ENCODE measurements at regions of chr7 and their contacts with region 1.

Region 1: GRCh38 chr7:100428967-100429636 is 529 bp upstream of the MEPCE start:
- DNase-seq: peak; percentile 100
- ATAC-seq: peak; percentile 76
- H3K4me3 ChIP-seq: peak overlapping the region; percentile 88
- H3K4me3 Mint-ChIP-seq: peak overlapping the region; percentile 93 to 100 (median 97)
- H3K27ac ChIP-seq: peak overlapping the region; percentile 97
- H3K27ac Mint-ChIP-seq: peak overlapping the region; percentile 99 to 100 (median 100)
- H3K4me1 ChIP-seq: peaks cover 22 to 29% of the 10 kb centered on the region in 2 donors
- H3K4me1 Mint-ChIP-seq: peaks cover 22 to 56% (median 42%) of the 10 kb centered on the region in 7 donors
- H3K27me3 ChIP-seq: no peaks in the 10 kb centered on the region
- H3K27me3 Mint-ChIP-seq: peaks cover 0 to 24% (median 0%) of the 10 kb centered on the region in 5 donors

Region 2: GRCh38 chr7:99472561-99473243 is 956.4 kb before region 1 on chr7 and contains the start of gene ZNF789:
- CTCF ChIA-PET with region 1: no interaction called
- POLR2A ChIA-PET with region 1: no interaction called
- intact Hi-C with region 1: loop called in 1 of 2 experiments (anchors 10 kb)
- DNase-seq: peak; percentile 90 to 98 (median 95)
- ATAC-seq: peak; percentile 99
- H3K4me3 ChIP-seq: peak within 1 kb of the TSS; percentile 86
- H3K4me3 Mint-ChIP-seq: peak within 1 kb of the TSS; percentile 94 to 99 (median 98)
- H3K27ac ChIP-seq: peak within 1 kb of the TSS; percentile 82
- H3K27ac Mint-ChIP-seq: peak within 1 kb of the TSS; percentile 87 to 98 (median 95)
- H3K4me1 ChIP-seq: peaks cover 8 to 15% of the 10 kb centered on the region in 2 donors
- H3K4me1 Mint-ChIP-seq: peaks cover 23 to 48% (median 35%) of the 10 kb centered on the region in 7 donors
- H3K27me3 ChIP-seq: no peaks in the 10 kb centered on the region
- H3K27me3 Mint-ChIP-seq: peaks cover 0 to 5% (median 0%) of the 10 kb centered on the region in 5 donors
- total RNA-seq, gene ZNF789: 17.4 to 28.0 (median 27.3) TPM

Region 3: DNA sequence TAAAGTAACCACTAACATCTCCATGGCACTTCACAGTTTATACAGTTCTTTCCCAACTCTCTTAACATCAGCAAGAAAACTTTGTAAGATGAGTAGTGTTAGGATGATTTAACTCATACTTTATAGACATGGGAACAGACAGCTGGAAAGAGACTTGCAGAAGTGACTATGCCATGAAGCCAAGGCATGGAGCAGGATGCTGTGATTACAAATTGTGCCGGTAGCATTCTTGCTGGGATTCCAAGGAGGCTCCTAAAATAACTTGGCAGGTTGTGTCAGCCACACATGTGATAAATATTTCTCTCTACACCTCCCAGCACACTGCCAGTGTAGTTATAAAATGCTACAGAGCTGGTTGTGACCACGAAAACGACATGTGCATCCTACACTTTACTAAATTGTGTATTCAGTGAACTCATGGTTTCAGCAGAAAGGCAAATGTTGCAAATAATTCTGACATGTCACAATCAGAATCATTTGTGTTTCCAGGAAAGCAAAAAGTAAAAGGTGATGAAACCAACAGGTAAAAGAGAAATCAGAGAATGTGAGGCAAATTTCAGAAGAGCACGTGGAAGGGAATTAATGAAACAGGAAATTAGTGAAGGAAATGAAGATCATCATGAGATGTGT is 639.5 kb before region 1 on chr7:
- CTCF ChIA-PET with region 1: no interaction called
- POLR2A ChIA-PET with region 1: no interaction called
- intact Hi-C with region 1: no loop called
- DNase-seq: no peak
- ATAC-seq: no peak
- H3K4me3 ChIP-seq: no peak overlapping the region
- H3K4me3 Mint-ChIP-seq: no peak overlapping the region
- H3K27ac ChIP-seq: no peak overlapping the region
- H3K27ac Mint-ChIP-seq: peak overlapping the region in 1 of 9 donors; percentile 19
- H3K4me1 ChIP-seq: no peaks in the 10 kb centered on the region
- H3K4me1 Mint-ChIP-seq: peaks cover 0 to 29% (median 12%) of the 10 kb centered on the region in 7 donors
- H3K27me3 ChIP-seq: no peaks in the 10 kb centered on the region
- H3K27me3 Mint-ChIP-seq: peaks cover 0 to 2% (median 0%) of the 10 kb centered on the region in 5 donors

Region 4: DNA sequence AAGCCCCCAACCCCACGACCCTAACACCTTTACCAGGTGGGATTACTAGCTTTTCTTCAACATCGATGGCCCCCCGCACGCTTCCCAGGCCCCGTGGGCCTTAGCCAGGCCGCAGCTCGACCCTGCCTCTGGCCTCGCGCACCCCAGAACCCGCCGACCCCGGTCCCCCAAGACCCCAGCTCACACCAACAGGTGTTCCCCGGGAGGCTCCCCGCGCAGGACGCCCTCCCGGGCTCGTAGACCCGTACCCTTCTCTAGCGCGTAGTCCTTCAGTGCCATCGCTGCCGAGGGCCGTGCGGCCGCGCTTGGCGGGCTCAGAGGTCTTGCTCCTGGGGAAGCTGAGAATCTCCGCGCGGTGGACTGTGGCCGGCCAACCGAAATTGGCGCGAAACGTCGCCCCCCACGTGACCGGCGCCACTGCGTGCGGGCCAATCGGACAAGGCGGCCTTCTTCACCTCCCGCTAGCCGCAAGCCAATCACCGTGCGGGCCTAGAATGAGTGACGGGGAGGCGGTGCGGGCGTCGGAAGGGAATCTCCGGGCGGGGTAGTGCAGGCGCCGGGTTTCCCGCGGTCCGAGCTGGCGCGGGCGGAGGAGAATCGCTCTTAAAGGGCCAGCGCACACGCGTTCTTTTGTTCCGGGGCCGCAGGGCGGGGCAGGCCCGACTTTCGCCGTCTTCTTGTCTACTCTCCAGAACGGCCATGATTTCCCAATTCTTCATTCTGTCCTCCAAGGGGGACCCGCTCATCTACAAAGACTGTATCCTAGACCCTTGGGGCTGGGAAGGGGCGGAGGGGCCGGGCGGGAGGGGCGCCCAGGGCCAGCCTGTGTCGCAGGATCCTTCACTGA is 327.9 kb before region 1 on chr7 and contains the starts of genes AP4M1 and MCM7:
- CTCF ChIA-PET with region 1: no interaction called
- POLR2A ChIA-PET with region 1: interaction called, 6 read pairs
- intact Hi-C with region 1: loop called (anchors 1 kb)
- DNase-seq: peak; percentile 84 to 98 (median 93)
- ATAC-seq: peak; percentile 90
- H3K4me3 ChIP-seq: peak within 1 kb of the TSS; percentile 98
- H3K4me3 Mint-ChIP-seq: peak within 1 kb of the TSS; percentile 85 to 95 (median 93)
- H3K27ac ChIP-seq: peak within 1 kb of the TSS; percentile 91
- H3K27ac Mint-ChIP-seq: peak within 1 kb of the TSS; percentile 90 to 98 (median 96)
- H3K4me1 ChIP-seq: peaks cover 17 to 25% of the 10 kb centered on the region in 2 donors
- H3K4me1 Mint-ChIP-seq: peaks cover 27 to 47% (median 41%) of the 10 kb centered on the region in 7 donors
- H3K27me3 ChIP-seq: no peaks in the 10 kb centered on the region
- H3K27me3 Mint-ChIP-seq: no peaks in the 10 kb centered on the region
- total RNA-seq, gene AP4M1: 7.5 to 13.8 (median 11.0) TPM
- total RNA-seq, gene MCM7: 80.3 to 263 (median 168) TPM

Region 5: DNA sequence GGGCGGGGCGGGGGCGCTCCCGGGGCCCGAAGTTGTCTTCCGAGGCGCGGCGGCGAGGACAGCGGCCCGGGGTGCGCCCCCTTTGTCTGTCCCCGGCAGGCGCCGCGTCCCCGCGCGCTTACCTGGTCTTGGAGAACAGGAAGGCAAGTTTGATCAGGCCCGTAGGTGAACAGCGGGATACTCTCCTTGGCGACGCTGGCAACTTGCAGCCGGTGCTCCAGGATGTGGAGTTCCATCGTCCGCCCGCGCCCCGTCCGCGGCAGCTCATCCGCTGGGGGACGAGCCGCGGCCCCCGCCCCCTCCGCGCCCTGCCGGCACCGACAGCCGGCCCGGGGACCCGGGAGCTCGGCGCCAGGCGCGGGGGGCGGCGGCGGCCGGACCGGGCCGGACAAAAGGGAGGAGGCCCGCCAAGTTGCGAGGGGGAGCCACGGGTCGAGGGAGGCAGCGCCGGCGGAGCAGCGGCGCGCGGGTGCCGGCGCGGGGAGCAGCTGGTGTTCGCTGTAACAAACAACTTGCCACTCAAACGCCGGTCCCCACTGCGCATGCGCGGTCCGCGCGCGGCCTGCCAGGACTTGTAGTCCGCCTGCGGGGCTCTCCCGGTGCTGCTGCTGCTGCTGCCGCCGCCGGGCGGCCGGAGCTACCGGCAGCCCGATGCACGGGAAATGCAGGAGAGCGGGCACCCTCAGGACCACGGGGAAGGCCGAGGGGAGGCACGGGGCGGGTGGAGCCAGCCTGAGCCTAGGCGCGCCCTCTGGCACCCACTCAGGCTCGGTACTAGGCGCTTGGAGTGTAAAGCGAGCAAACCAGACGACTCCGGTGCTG is 157.2 kb before region 1 on chr7:
- CTCF ChIA-PET with region 1: no interaction called
- POLR2A ChIA-PET with region 1: interaction called, 7 read pairs
- intact Hi-C with region 1: loop called (anchors 1 kb)
- DNase-seq: peak; percentile 97 to 99 (median 98)
- ATAC-seq: peak; percentile 96
- H3K4me3 ChIP-seq: peak overlapping the region; percentile 61
- H3K4me3 Mint-ChIP-seq: peak overlapping the region; percentile 78 to 89 (median 82)
- H3K27ac ChIP-seq: peak overlapping the region; percentile 61
- H3K27ac Mint-ChIP-seq: peak overlapping the region in 4 of 9 donors; percentile 21 to 84 (median 46)
- H3K4me1 ChIP-seq: peaks cover 0 to 4% of the 10 kb centered on the region in 2 donors
- H3K4me1 Mint-ChIP-seq: peaks cover 8 to 19% (median 17%) of the 10 kb centered on the region in 7 donors
- H3K27me3 ChIP-seq: no peaks in the 10 kb centered on the region
- H3K27me3 Mint-ChIP-seq: peaks cover 0 to 4% (median 0%) of the 10 kb centered on the region in 5 donors

Region 6: DNA sequence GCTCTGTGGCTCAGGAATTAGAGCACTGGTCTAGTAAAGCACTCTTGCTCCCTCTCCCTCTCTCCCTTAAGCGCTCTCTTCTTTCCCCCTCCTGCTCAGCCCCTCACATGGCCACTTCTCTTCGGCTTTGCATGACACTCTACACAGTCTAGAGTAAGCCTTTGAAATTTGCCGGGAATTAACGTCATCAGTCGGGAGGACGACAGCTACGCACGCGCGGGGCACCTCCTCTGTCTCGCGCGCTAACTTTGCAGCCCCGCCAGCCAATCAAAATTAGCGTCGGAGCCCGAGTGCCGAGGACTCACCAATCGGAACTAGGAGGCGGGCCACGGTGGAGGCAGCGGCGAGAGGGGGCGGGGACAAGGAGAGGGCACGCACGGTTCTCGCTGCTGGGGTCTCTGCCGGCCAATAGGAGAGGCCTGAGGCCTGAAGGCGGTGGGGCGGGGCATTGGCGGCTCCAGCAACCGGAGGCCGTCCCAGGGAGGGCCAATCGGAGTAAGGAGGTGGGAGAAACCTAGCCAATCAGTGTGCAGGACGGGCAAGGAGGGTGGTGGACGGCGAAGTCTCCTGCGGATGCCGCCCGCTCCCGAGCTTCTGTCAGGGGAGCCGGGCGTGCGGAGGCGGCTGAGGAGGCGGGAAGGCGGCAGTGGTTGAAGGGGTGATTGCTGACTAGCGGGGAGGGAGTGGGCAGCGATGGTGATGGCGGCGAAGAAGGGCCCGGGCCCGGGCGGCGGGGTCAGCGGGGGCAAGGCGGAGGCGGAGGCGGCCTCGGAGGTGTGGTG is 109.7 kb after region 1 on chr7 and contains the start of gene AGFG2:
- CTCF ChIA-PET with region 1: no interaction called
- POLR2A ChIA-PET with region 1: interaction called, 4 read pairs
- intact Hi-C with region 1: loop called (anchors 1 kb)
- DNase-seq: peak; percentile 98 to 100 (median 100)
- ATAC-seq: peak; percentile 99
- H3K4me3 ChIP-seq: peak within 1 kb of the TSS; percentile 73
- H3K4me3 Mint-ChIP-seq: peak within 1 kb of the TSS; percentile 85 to 100 (median 96)
- H3K27ac ChIP-seq: peak within 1 kb of the TSS; percentile 64
- H3K27ac Mint-ChIP-seq: peak within 1 kb of the TSS; percentile 82 to 97 (median 90)
- H3K4me1 ChIP-seq: peaks cover 30 to 39% of the 10 kb centered on the region in 2 donors
- H3K4me1 Mint-ChIP-seq: peaks cover 26 to 53% (median 48%) of the 10 kb centered on the region in 7 donors
- H3K27me3 ChIP-seq: no peaks in the 10 kb centered on the region
- H3K27me3 Mint-ChIP-seq: peaks cover 0 to 2% (median 0%) of the 10 kb centered on the region in 5 donors
- total RNA-seq, gene AGFG2: 15.8 to 42.4 (median 23.3) TPM

Region 7: DNA sequence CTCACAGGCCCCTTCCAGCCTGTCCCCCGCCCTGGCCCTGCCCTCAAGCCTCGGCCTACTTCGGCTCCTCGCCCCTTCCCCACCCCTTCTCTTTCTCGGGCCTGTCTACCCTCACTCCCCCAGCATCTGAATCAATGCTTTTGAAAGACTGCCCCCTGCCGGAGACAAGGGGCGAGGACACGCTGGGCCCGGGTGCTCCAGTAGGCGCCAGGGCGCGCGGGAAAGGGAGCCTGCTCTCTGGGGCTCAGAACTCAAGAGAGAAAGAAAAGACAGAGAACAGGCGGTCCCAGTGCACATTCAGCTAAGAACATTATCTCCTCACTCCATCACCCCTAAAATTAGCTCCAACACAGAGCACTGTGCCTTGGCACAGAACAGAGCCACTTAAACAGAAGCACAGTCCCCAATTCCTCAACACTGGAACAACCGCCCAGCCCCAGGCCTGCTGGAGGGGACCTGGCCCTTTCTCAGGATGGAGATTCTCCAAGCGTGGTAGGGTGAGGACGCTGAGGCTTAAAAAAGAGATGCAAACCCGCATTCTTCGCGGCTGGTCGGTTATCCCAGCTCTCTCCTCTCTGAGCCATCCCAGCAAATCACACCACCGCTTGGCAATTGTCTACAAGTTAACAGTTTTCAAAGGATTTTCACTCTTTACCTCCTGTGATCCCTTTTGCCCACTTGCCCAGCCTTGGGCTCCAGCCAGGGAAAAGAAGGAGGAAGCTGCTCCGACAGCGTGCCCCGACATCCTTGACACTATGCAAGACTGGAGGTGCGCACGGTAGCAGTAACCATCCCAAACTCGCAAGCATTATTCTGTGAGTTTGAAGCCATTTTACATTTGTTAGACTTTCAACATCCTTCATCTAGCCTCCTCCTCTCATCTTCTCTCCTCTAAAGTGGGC is 262.8 kb after region 1 on chr7:
- CTCF ChIA-PET with region 1: no interaction called
- POLR2A ChIA-PET with region 1: interaction called, 5 read pairs
- intact Hi-C with region 1: loop called in 1 of 2 experiments (anchors 5 kb)
- DNase-seq: peak; percentile 64 to 85 (median 78)
- ATAC-seq: peak; percentile 79
- H3K4me3 ChIP-seq: peak overlapping the region; percentile 67
- H3K4me3 Mint-ChIP-seq: peak overlapping the region; percentile 92 to 100 (median 94)
- H3K27ac ChIP-seq: peak overlapping the region; percentile 73
- H3K27ac Mint-ChIP-seq: peak overlapping the region; percentile 62 to 96 (median 95)
- H3K4me1 ChIP-seq: peaks cover 23 to 27% of the 10 kb centered on the region in 2 donors
- H3K4me1 Mint-ChIP-seq: peaks cover 29 to 54% (median 41%) of the 10 kb centered on the region in 7 donors
- H3K27me3 ChIP-seq: no peaks in the 10 kb centered on the region
- H3K27me3 Mint-ChIP-seq: peaks cover 0 to 16% (median 0%) of the 10 kb centered on the region in 5 donors

Region 8: DNA sequence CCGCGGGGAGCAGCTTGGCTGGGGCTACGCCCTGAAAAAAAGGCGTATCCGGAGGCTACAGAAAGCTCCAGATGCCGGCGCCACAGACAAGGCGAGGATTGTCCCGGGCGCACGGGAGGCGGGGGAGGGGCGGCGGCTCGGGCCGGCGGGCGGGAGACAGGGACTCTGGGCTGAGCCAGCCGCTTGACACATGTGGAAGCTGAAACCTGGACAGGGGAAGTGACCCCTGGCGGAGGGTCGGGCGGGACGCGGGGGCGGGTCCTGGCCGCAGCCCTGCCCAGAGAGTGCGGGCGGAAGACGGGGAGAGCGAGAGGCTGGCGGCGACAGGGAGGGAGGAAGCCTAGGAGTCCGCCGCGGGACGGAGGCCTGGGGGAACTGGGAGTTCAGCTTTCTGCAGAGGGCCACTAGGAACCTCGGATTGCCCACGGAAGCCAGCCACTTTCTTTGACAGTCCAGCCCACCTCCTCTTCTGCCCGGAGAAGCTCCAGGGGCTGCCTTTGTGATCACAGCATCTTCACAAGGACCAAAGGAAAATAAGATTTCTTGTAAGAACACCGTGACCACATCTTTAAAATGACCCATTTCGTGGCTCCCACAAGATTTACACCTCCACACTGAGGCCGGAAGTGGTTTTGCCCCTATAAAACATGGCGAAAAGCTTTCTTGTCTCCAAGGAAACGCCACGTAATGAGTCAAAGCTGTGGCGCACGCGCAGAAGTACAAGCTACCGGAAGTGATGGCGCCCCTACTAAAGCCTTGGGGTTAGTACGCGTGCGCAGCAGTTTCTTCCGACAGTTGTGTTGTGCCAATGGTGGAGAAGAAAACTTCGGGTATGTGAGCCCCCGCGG is 788.5 kb after region 1 on chr7 and contains the starts of genes PLOD3 and ZNHIT1:
- CTCF ChIA-PET with region 1: no interaction called
- POLR2A ChIA-PET with region 1: no interaction called
- intact Hi-C with region 1: loop called in 1 of 2 experiments (anchors 1 kb)
- DNase-seq: peak; percentile 86 to 97 (median 94)
- ATAC-seq: peak; percentile 85
- H3K4me3 ChIP-seq: peak within 1 kb of the TSS; percentile 70
- H3K4me3 Mint-ChIP-seq: peak within 1 kb of the TSS; percentile 89 to 97 (median 96)
- H3K27ac ChIP-seq: peak within 1 kb of the TSS; percentile 87
- H3K27ac Mint-ChIP-seq: peak within 1 kb of the TSS; percentile 88 to 96 (median 93)
- H3K4me1 ChIP-seq: peaks cover 15% of the 10 kb centered on the region in 2 donors
- H3K4me1 Mint-ChIP-seq: peaks cover 27 to 54% (median 46%) of the 10 kb centered on the region in 7 donors
- H3K27me3 ChIP-seq: no peaks in the 10 kb centered on the region
- H3K27me3 Mint-ChIP-seq: no peaks in the 10 kb centered on the region
- total RNA-seq, gene PLOD3: 18.5 to 88.4 (median 44.2) TPM
- total RNA-seq, gene ZNHIT1: 32.1 to 72.1 (median 37.6) TPM